Breast epithelium (tissue), 4 donors: ENCODE measurements at regions of chr11 and their contacts with region 1.

Region 1: GRCh38 chr11:72084965-72085364 is 4.3 kb downstream of the LRRC51 start:
- DNase-seq: no peak
- H3K4me3 ChIP-seq: no peak overlapping the region
- H3K27ac ChIP-seq: no peak overlapping the region
- H3K4me1 ChIP-seq: peaks cover 0 to 4% of the 10 kb centered on the region in 2 donors
- H3K27me3 ChIP-seq: no peaks in the 10 kb centered on the region
- CTCF ChIP-seq: no peak
- POLR2A ChIP-seq: no peak

Region 2: GRCh38 chr11:72069787-72070251 is 15.1 kb before region 1 on chr11:
- intact Hi-C with region 1: loop called (anchors 1 kb)
- DNase-seq: peak; percentile 70 to 71
- H3K4me3 ChIP-seq: no peak overlapping the region
- H3K27ac ChIP-seq: peak overlapping the region; percentile 88 to 90
- H3K4me1 ChIP-seq: peaks cover 4 to 27% of the 10 kb centered on the region in 2 donors
- H3K27me3 ChIP-seq: no peaks in the 10 kb centered on the region
- CTCF ChIP-seq: no peak
- POLR2A ChIP-seq: no peak